ENCODE measurements at regions of chr9 and their contacts with region 1.

Region 1: DNA sequence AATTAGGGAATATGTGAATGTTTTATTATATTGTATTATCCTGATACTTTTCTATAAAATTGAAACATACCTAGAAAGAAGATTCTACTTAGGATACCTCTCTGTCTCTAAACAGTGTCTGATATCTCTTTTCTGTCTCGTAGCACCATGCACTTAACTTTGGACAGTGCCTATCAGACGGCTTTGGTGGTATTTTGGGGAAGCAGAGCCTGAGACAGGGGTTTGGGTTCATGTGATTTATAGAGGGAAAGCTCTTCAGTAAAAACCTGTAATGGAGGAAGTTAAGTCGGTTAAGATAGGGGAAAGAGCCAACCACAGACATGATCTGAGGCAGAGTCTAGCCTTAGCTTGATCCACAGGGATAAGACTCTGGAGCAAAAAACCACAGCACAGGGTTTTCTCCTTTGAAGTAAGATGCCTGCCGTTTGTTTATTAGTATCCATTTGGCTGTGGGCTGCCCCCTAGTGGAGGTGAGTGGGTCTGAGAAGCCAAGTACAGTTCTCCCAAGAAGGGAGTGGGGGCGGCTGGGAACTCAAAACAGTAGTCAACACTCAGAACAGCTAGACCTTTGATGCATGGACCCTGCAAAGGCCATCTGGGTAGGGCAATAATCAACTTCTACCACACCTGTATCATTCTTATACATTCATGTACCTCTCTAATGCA is 141.2 kb upstream of the ASTN2 start:
- DNase-seq: peak in 1 of 9 donors; percentile 31
- ATAC-seq: no peak
- H3K4me3 ChIP-seq: no peak overlapping the region
- H3K4me3 Mint-ChIP-seq: no peak overlapping the region
- H3K27ac ChIP-seq: no peak overlapping the region
- H3K27ac Mint-ChIP-seq: no peak overlapping the region
- H3K4me1 ChIP-seq: no peaks in the 10 kb centered on the region
- H3K4me1 Mint-ChIP-seq: no peaks in the 10 kb centered on the region
- H3K27me3 ChIP-seq: peaks cover 0 to 4% of the 10 kb centered on the region in 2 donors
- H3K27me3 Mint-ChIP-seq: peaks cover 0 to 25% (median 15%) of the 10 kb centered on the region in 5 donors

Region 2: DNA sequence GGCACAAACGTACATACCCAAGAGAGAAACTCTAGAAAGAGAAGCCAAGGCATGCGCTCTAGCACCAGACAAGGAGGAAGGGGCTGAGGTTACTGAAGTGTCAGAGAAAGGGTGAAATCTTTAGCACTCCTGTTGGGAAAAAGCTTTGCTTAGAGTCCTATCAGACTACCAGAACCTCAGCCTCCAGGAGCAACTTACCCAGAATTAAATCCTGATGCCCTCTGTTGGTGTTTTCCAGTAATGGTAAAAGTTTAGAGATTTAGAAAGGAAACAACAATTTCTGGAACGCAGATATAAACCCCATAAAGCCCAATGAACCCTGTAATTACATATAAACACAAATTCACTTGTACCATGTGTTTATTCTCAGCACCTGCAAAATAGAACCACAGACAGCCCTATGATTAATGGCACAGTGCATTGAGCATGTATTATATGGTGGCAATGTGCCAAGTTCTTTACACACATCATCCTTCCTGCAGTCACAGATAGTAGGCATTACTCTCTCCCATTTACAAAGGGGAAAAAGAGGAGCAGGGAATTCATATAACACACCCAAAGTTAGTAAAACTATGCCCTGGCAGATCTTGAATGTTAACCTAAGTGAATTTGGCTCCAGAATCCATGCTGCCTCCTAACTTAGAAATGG is 107.9 kb before region 1 on chr9:
- CTCF ChIA-PET with region 1: no interaction called
- POLR2A ChIA-PET with region 1: no interaction called
- intact Hi-C with region 1: no loop called
- DNase-seq: no peak
- ATAC-seq: no peak
- H3K4me3 ChIP-seq: no peak overlapping the region
- H3K4me3 Mint-ChIP-seq: no peak overlapping the region
- H3K27ac ChIP-seq: no peak overlapping the region
- H3K27ac Mint-ChIP-seq: no peak overlapping the region
- H3K4me1 ChIP-seq: no peaks in the 10 kb centered on the region
- H3K4me1 Mint-ChIP-seq: no peaks in the 10 kb centered on the region
- H3K27me3 ChIP-seq: no peaks in the 10 kb centered on the region
- H3K27me3 Mint-ChIP-seq: peaks cover 0 to 7% (median 0%) of the 10 kb centered on the region in 5 donors

Region 3: DNA sequence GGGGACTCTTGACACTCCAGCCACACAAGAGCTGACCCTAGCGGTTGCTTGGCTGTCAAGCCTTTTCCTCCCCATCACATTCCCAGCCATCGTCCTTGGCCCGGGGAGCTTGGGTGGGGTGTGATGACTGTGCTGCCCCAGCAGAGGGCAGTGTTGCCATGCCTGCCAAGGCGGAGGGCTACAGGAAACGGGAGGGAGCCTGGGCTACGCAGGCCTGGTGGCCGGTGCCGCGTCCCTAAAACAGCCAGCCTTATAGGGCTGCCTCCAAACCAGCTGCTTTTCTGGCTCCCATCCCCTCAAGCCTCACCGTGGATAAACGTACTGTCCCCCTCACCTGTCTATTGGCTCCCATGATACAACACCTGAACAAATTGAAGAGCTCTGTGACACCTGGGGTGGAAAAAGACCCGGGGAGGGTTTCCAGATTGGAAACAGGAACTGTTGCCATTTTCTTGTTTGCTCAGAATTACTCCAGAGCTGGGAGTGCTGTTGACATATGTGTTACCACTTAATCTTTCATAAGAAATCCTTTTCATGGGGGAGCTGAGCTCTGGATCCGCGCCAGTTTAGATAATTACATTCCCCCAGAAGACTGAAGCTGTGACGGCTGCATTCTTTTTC is 68.4 kb before region 1 on chr9:
- CTCF ChIA-PET with region 1: no interaction called
- POLR2A ChIA-PET with region 1: no interaction called
- intact Hi-C with region 1: loop called in 1 of 2 experiments (anchors 2 kb)
- DNase-seq: peak in 7 of 9 donors; percentile 1 to 58 (median 6)
- ATAC-seq: peak; percentile 75
- H3K4me3 ChIP-seq: no peak overlapping the region
- H3K4me3 Mint-ChIP-seq: peak overlapping the region in 1 of 10 donors; percentile 24
- H3K27ac ChIP-seq: no peak overlapping the region
- H3K27ac Mint-ChIP-seq: no peak overlapping the region
- H3K4me1 ChIP-seq: no peaks in the 10 kb centered on the region
- H3K4me1 Mint-ChIP-seq: no peaks in the 10 kb centered on the region
- H3K27me3 ChIP-seq: no peaks in the 10 kb centered on the region
- H3K27me3 Mint-ChIP-seq: peaks cover 0 to 24% (median 8%) of the 10 kb centered on the region in 5 donors